ENCODE measurements at regions of chr3 and their contacts with region 1.

Region 1: DNA sequence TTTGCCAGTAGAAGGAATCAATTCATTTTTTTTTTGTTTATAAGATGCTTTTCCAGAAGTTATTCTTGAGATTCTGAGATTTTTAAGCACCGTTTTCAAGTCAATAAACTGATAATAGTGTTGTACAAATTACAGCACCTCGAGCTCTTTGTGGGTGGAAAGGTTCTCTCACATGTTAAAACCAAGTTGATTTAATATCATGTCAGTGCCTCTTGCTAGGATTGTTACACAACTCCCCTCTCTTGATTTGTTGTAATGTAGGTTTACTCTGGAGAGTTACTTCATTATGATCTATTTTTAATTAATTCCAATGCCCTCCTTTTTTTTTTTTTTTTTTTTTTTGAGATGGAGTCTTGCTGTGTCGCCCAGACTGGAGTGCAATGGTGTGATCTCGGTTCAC is 25.8 kb upstream of the UBXN7 start:
- DNase-seq: no peak
- ATAC-seq: no peak
- H3K4me3 ChIP-seq: no peak overlapping the region
- H3K27ac ChIP-seq: no peak overlapping the region
- H3K4me1 ChIP-seq: no peaks in the 10 kb centered on the region
- H3K27me3 ChIP-seq: no peaks in the 10 kb centered on the region
- CTCF ChIP-seq: no peak
- POLR2A ChIP-seq: no peak
- RAD21 ChIP-seq: no peak

Region 2: GRCh38 chr3:196496183-196496582 is 38.1 kb after region 1 on chr3:
- CTCF ChIA-PET with region 1: no interaction called
- POLR2A ChIA-PET with region 1: no interaction called
- RAD21 ChIA-PET with region 1: interaction called in 1 of 2 experiments, 10 read pairs
- intact Hi-C with region 1: no loop called
- DNase-seq: no peak
- ATAC-seq: no peak
- H3K4me3 ChIP-seq: no peak overlapping the region
- H3K27ac ChIP-seq: no peak overlapping the region
- H3K4me1 ChIP-seq: peaks cover 0 to 3% of the 10 kb centered on the region in 2 experiments; a peak in 2 of 4 replicates
- H3K27me3 ChIP-seq: no peaks in the 10 kb centered on the region
- CTCF ChIP-seq: no peak
- POLR2A ChIP-seq: no peak
- RAD21 ChIP-seq: no peak